Activated T-helper 1 cell treated with anti-CD3 and anti-CD28 coated beads, Interleukin-12 subunit alpha, Interleukin-12 subunit beta, Interleukin-2, Interleukin-4 antibody, amounts not matched to agents 30 ng/mL and 10 ng/mL and 1 ng/mL, durations not matched to agents 14 hours and 24 hours and 36 hours (primary cell): ENCODE measurements at regions of chr7 and their contacts with region 1.

Region 1: GRCh38 chr7:55534175-55534915 is 38.0 kb downstream of the VOPP1 start:
- DNase-seq: peak; percentile 84
- H3K4me3 Mint-ChIP-seq: peak overlapping the region; percentile 75
- H3K27ac Mint-ChIP-seq: peak overlapping the region; percentile 98
- H3K4me1 Mint-ChIP-seq: peaks cover 95% of the 10 kb centered on the region
- H3K27me3 Mint-ChIP-seq: no peaks in the 10 kb centered on the region

Region 2: DNA sequence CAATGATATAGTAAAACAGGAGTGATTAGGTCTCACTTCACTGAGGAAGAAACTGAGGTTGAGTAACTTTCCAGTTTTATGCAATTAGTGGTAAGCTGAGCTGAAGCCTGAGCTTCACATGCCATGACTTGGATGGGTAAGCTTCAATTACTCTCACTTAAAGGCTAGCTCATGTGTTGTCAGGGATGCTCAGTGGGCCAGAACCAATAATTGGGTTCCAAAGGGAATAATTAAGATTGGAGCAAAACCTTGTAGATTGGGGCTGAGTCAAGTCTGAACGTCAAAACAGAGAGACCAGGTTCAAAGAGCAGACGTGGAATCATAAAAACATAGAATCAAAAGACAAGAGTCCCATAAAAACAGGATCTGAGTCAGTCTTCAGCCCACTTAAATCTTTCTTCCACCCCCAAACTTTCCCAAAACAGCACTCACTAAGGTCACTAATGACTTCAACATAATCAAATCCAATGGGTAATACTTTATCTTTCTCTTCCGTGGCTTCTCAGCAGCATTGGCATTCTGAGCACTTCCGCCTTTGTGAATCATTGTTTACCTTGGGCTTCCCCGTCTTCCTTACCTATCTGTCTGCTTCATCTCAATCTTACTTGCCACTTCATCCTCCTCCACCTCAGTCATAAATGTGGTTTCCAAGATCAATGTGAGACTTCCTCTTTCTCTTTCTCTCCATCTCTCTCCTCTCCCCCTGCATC is 538.6 kb before region 1 on chr7:
- intact Hi-C with region 1: loop called (anchors 5 kb)
- DNase-seq: peak; percentile 32
- H3K4me3 Mint-ChIP-seq: peak overlapping the region; percentile 19
- H3K27ac Mint-ChIP-seq: peak overlapping the region; percentile 70
- H3K4me1 Mint-ChIP-seq: peaks cover 26% of the 10 kb centered on the region
- H3K27me3 Mint-ChIP-seq: peaks cover 10% of the 10 kb centered on the region

Region 3: GRCh38 chr7:55309040-55309991 is 225.0 kb before region 1 on chr7:
- intact Hi-C with region 1: loop called (anchors 1 kb)
- DNase-seq: peak; percentile 61
- H3K4me3 Mint-ChIP-seq: peak overlapping the region; percentile 20
- H3K27ac Mint-ChIP-seq: peak overlapping the region; percentile 93
- H3K4me1 Mint-ChIP-seq: peaks cover 36% of the 10 kb centered on the region
- H3K27me3 Mint-ChIP-seq: peaks cover 20% of the 10 kb centered on the region

Region 4: DNA sequence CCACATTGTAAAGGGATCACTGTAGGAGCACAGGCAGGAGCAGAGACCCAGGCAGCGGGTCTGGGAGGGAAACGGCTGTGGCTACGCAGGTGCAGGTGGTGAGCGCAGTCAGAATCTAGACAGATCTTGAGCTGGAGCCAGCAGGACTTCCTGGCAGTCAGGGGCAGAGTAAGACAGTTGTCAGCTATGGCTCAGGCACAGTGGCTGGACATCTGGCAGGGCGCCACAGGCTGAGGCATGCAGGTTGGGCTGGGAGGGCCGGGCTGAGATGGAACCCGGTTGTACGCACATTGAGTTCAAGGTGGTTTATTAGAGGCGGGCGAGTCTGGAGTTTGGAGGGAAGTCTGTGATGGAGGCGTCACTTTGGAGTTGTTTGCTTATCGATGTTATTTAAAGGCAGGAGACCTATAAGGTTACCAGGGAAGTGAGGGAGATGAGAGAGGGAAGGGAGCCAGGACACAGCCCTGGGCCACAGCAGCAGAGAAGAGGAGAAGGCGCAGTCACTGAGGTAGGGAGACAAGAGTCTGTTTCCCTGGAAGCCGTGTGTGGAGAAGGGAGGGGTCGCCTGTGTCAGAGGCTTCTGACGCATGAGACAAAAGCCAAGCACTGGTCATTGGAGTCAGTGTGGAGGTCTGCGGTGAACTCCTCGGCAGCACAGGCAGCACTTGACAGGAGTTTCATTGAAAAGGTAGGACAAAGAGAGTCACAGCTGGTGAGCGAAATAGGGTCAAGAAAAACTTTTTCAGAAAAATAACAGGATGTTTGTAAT is 95.4 kb before region 1 on chr7:
- intact Hi-C with region 1: no loop called
- DNase-seq: no peak
- H3K4me3 Mint-ChIP-seq: no peak overlapping the region
- H3K27ac Mint-ChIP-seq: no peak overlapping the region
- H3K4me1 Mint-ChIP-seq: peaks cover 37% of the 10 kb centered on the region
- H3K27me3 Mint-ChIP-seq: no peaks in the 10 kb centered on the region

Region 5: GRCh38 chr7:55469271-55469681 is 65.1 kb before region 1 on chr7:
- intact Hi-C with region 1: loop called (anchors 2 kb)
- DNase-seq: peak; percentile 16
- H3K4me3 Mint-ChIP-seq: peak overlapping the region; percentile 53
- H3K27ac Mint-ChIP-seq: peak overlapping the region; percentile 74
- H3K4me1 Mint-ChIP-seq: peaks cover 53% of the 10 kb centered on the region
- H3K27me3 Mint-ChIP-seq: no peaks in the 10 kb centered on the region

Region 6: GRCh38 chr7:55517191-55517633 is 17.1 kb before region 1 on chr7:
- intact Hi-C with region 1: loop called (anchors 1 kb)
- DNase-seq: peak; percentile 41
- H3K4me3 Mint-ChIP-seq: peak overlapping the region; percentile 19
- H3K27ac Mint-ChIP-seq: peak overlapping the region; percentile 70
- H3K4me1 Mint-ChIP-seq: peaks cover 78% of the 10 kb centered on the region
- H3K27me3 Mint-ChIP-seq: no peaks in the 10 kb centered on the region

Region 7: GRCh38 chr7:55557666-55558188 is 23.4 kb after region 1 on chr7:
- intact Hi-C with region 1: loop called (anchors 1 kb)
- DNase-seq: no peak
- H3K4me3 Mint-ChIP-seq: peak overlapping the region; percentile 48
- H3K27ac Mint-ChIP-seq: peak overlapping the region; percentile 87
- H3K4me1 Mint-ChIP-seq: peaks cover 100% of the 10 kb centered on the region
- H3K27me3 Mint-ChIP-seq: no peaks in the 10 kb centered on the region

Region 8: GRCh38 chr7:55951637-55952351 is 417.4 kb after region 1 on chr7 and contains the start of gene MRPS17:
- intact Hi-C with region 1: loop called (anchors 1 kb)
- DNase-seq: peak; percentile 92
- H3K4me3 Mint-ChIP-seq: peak within 1 kb of the TSS; percentile 92
- H3K27ac Mint-ChIP-seq: peak within 1 kb of the TSS; percentile 92
- H3K4me1 Mint-ChIP-seq: peaks cover 10% of the 10 kb centered on the region
- H3K27me3 Mint-ChIP-seq: no peaks in the 10 kb centered on the region
- total RNA-seq, gene MRPS17: 38.2 and 39.3 TPM in 2 replicates